T-cell (primary cell): ENCODE measurements at regions of chr7 and their contacts with region 1.

Region 1: GRCh38 chr7:105877736-105878135 is 1.3 kb upstream of the ATXN7L1 start:
- DNase-seq: peak in 1 of 35 experiments; percentile 9
- ATAC-seq: no peak
- H3K4me3 ChIP-seq: peak overlapping the region; percentile 80 to 88
- H3K4me3 Mint-ChIP-seq: peak overlapping the region; percentile 86 to 91 (median 88)
- H3K27ac ChIP-seq: no peak overlapping the region
- H3K27ac Mint-ChIP-seq: peak overlapping the region; percentile 10 to 72
- H3K4me1 ChIP-seq: peaks cover 19 to 45% of the 10 kb centered on the region in 2 experiments
- H3K4me1 Mint-ChIP-seq: peaks cover 64 to 72% (median 66%) of the 10 kb centered on the region in 3 donors
- H3K27me3 ChIP-seq: no peaks in the 10 kb centered on the region
- H3K27me3 Mint-ChIP-seq: no peaks in the 10 kb centered on the region

Region 2: GRCh38 chr7:105621617-105622016 is 256.1 kb before region 1 on chr7:
- CTCF ChIA-PET with region 1: no interaction called
- POLR2A ChIA-PET with region 1: no interaction called
- DNase-seq: no peak
- ATAC-seq: no peak
- H3K4me3 ChIP-seq: no peak overlapping the region
- H3K4me3 Mint-ChIP-seq: no peak overlapping the region
- H3K27ac ChIP-seq: no peak overlapping the region
- H3K27ac Mint-ChIP-seq: no peak overlapping the region
- H3K4me1 ChIP-seq: no peaks in the 10 kb centered on the region
- H3K4me1 Mint-ChIP-seq: no peaks in the 10 kb centered on the region
- H3K27me3 ChIP-seq: no peaks in the 10 kb centered on the region
- H3K27me3 Mint-ChIP-seq: no peaks in the 10 kb centered on the region

Region 3: DNA sequence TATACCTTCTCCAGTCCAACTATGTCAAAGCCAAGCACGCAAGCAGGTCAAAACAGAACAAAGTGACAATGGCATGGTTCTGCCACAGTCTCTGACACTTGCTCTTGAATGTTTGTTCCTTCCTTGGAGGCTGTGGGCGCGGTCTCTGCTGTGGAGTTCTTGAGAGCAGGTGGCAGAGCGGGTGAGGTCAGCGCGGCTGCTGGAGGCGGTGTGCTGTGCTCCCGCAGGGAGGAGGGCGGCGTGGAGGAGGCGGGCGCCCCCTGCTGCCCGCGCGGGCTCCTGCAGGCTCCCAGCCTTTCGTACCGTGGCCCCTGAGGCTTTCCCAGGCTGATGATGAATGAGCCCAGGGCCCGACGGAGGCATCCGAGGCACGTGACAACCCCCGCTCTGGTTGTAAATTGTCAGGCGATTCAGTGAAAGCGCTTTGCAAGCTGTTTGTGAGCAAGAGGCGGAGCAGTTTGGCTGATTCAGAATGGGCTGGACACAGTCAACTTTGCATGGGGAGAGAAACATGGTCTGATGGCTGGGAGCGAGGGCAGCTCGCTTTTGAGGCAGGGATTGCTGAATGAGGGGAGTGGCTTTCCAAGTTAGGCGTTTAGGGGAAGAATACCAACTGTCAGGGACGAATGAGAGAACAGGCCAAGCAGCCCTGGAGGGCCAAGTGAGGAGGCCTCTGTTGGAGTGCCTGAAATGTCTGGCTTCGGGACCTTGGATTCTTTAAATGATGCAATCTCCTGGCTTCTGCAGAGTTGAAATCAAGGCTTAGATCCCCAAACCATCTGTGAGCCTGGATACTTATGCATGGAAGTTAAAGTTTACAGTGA is 131.9 kb after region 1 on chr7:
- CTCF ChIA-PET with region 1: interaction called in 1 of 2 experiments, 3 read pairs
- POLR2A ChIA-PET with region 1: interaction called in 1 of 2 experiments, 11 read pairs
- DNase-seq: peak; percentile 66 to 89 (median 75)
- ATAC-seq: peak; percentile 95 to 97 (median 96)
- H3K4me3 ChIP-seq: no peak overlapping the region
- H3K4me3 Mint-ChIP-seq: peak overlapping the region in 1 of 3 donors; percentile 44
- H3K27ac ChIP-seq: no peak overlapping the region
- H3K27ac Mint-ChIP-seq: peak overlapping the region; percentile 44 to 63
- H3K4me1 ChIP-seq: peaks cover 7 to 24% of the 10 kb centered on the region in 2 experiments
- H3K4me1 Mint-ChIP-seq: peaks cover 37 to 42% (median 40%) of the 10 kb centered on the region in 3 donors
- H3K27me3 ChIP-seq: no peaks in the 10 kb centered on the region
- H3K27me3 Mint-ChIP-seq: peaks cover 0 to 4% of the 10 kb centered on the region in 2 donors